ENCODE measurements at regions of chr11 and their contacts with region 1.

Region 1: GRCh38 chr11:9265211-9266131 is at the start of gene DENND5A:
- DNase-seq: peak; percentile 83
- ATAC-seq: peak; percentile 89
- H3K4me3 ChIP-seq: peak within 1 kb of the TSS; percentile 69
- H3K27ac ChIP-seq: peak within 1 kb of the TSS; percentile 91
- H3K4me1 ChIP-seq: peaks cover 9% of the 10 kb centered on the region
- H3K27me3 ChIP-seq: no peaks in the 10 kb centered on the region
- CTCF ChIP-seq: no peak
- POLR2A ChIP-seq: peak; percentile 76; the same call in 1 of the 2 replicates
- RAD21 ChIP-seq: 0 out of 2 replicates have a peak, but pooled peaks have one; percentile 6
- total RNA-seq, gene DENND5A: 182 and 192 TPM in 2 replicates

Region 2: GRCh38 chr11:9150501-9150900 is 115.0 kb before region 1 on chr11:
- CTCF ChIA-PET with region 1: no interaction called
- POLR2A ChIA-PET with region 1: interaction called, 4 read pairs
- dilution Hi-C with region 1: no loop called
- in situ Hi-C with region 1: no loop called
- intact Hi-C with region 1: loop called (anchors 5 kb)
- DNase-seq: peak; percentile 95
- ATAC-seq: peak; percentile 90
- H3K4me3 ChIP-seq: no peak overlapping the region
- H3K27ac ChIP-seq: 0 out of 2 replicates have a peak overlapping the region, but pooled peaks have one; percentile 6
- H3K4me1 ChIP-seq: peaks cover 7% of the 10 kb centered on the region
- H3K27me3 ChIP-seq: no peaks in the 10 kb centered on the region
- CTCF ChIP-seq: no peak
- POLR2A ChIP-seq: no peak
- RAD21 ChIP-seq: no peak

Region 3: DNA sequence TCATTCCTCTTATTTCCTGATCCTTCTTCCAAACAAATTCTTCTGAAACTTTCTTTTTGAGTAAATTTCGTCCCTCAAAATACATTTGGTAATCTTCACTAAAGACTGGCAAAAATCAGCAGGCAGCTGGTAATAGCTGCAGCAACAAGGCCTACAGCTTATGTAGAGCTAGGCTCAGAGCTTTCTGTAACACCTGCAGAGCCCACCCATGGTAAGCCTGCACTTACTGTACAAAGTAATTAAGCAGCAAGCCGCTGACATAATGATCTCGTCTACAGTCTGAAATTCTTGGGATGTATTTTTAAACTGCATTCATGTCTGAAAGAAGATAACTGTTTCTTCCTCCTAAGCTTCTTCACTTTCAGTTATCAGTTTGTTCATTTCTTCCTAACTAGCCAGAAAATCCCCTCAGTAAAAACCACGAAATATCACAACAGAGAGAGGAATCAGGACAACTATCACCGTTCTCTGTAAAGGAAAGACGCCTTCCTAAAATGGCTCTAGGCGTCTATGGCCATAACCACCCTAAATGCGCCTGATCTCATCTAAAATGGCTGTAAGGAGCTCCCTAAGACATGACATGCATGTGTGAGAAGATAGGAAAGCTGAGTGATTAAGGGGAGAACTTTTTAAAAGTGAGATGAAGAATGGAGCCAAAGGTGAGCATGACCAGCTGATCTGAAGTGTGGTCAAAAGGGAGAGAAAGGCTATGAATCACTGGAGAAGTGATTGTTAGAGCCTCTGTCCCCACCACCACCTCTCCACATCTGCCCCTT is 56.6 kb before region 1 on chr11:
- CTCF ChIA-PET with region 1: no interaction called
- POLR2A ChIA-PET with region 1: no interaction called
- dilution Hi-C with region 1: no loop called
- in situ Hi-C with region 1: no loop called
- intact Hi-C with region 1: loop called (anchors 5 kb)
- DNase-seq: no peak
- ATAC-seq: no peak
- H3K4me3 ChIP-seq: no peak overlapping the region
- H3K27ac ChIP-seq: no peak overlapping the region
- H3K4me1 ChIP-seq: peaks cover 13% of the 10 kb centered on the region
- H3K27me3 ChIP-seq: no peaks in the 10 kb centered on the region
- CTCF ChIP-seq: no peak
- POLR2A ChIP-seq: no peak
- RAD21 ChIP-seq: no peak

Region 4: DNA sequence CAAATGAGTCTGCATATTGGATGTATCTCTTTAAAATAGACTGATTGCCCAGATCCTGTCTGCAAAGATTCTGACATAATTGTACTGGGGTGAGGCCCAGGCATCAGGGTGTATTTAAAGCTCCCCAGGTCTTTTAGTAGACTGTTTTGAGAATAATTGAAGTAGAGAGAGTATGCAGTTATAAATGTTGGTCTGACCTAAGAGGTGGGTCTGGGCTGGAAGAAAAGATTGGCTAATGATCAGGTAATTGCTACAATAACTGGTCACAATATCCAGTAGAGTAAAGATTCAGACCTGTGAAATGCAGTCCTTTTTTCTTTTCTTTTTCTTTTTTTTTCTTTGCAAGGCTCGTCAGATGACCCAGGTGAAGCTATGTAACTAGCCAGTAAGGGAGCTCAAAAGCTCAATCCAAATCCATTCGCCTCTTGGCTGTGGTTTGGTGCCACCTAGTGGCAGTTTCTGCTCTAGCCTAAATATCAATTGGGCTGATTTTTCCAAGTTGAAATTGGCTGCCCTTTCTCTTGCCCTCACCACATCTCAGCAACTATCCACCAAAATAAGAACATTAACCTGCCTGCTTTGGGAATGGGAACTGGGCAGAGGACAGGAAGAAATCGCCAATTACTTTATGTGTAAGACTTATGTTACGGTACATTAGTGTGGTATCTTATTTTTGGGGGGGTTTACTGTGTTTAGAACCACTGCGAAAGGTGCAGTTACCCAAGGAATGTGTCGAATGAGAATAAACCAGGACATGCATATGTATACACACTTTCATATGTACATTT is 241.2 kb after region 1 on chr11:
- CTCF ChIA-PET with region 1: interaction called, 5 read pairs
- POLR2A ChIA-PET with region 1: no interaction called
- dilution Hi-C with region 1: no loop called
- in situ Hi-C with region 1: no loop called
- intact Hi-C with region 1: loop called (anchors 10 kb)
- DNase-seq: peak; percentile 81
- ATAC-seq: peak; percentile 90
- H3K4me3 ChIP-seq: no peak overlapping the region
- H3K27ac ChIP-seq: no peak overlapping the region
- H3K4me1 ChIP-seq: peaks cover 4% of the 10 kb centered on the region
- H3K27me3 ChIP-seq: no peaks in the 10 kb centered on the region
- CTCF ChIP-seq: peak; percentile 95
- POLR2A ChIP-seq: no peak
- RAD21 ChIP-seq: peak; percentile 95

Region 5: DNA sequence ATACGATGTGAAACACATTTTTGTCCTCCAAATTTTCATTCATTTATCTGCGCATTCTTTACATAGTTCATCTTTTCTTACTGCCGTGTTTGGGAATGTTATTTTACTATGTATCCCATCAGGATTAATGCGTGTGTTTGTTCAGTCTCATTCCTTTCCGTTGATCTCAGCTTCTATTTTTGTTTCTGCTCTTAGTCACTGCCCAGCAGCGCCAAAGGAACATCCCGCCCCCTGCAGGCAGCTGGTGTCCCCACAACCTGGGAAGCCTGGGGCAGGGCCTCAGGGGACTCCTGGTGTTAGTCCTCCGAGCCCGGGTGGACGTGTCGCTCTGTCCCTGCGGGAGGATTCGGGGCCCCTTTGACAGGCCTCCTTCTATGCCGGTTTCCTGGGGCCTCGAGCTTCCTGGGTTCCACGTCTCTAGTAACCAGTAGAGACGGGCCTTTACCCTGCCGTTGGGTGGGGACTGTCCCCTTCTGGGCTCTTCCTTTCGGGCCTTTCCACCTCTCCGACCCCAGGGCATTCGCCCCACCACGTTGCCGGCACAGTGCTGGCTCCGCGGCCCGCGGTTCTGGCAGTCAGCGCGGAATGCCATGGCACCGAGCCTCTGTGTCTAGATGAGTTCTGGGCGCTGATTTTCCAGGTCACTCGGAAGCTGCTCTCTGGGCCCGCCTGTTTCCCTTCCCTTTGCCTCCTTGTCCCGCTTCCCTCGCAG is 347.8 kb after region 1 on chr11:
- CTCF ChIA-PET with region 1: no interaction called
- POLR2A ChIA-PET with region 1: no interaction called
- dilution Hi-C with region 1: no loop called
- in situ Hi-C with region 1: no loop called
- intact Hi-C with region 1: no loop called
- DNase-seq: peak; percentile 98
- ATAC-seq: peak; percentile 83
- H3K4me3 ChIP-seq: peak overlapping the region; percentile 7; the same call in 1 of the 2 replicates
- H3K27ac ChIP-seq: peak overlapping the region; percentile 91
- H3K4me1 ChIP-seq: peaks cover 16% of the 10 kb centered on the region
- H3K27me3 ChIP-seq: no peaks in the 10 kb centered on the region
- CTCF ChIP-seq: peak; percentile 98
- POLR2A ChIP-seq: peak; percentile 75
- RAD21 ChIP-seq: peak; percentile 79